Endothelial cell of umbilical vein (primary cell): ENCODE measurements at regions of chr14 and their contacts with region 1.

Region 1: DNA sequence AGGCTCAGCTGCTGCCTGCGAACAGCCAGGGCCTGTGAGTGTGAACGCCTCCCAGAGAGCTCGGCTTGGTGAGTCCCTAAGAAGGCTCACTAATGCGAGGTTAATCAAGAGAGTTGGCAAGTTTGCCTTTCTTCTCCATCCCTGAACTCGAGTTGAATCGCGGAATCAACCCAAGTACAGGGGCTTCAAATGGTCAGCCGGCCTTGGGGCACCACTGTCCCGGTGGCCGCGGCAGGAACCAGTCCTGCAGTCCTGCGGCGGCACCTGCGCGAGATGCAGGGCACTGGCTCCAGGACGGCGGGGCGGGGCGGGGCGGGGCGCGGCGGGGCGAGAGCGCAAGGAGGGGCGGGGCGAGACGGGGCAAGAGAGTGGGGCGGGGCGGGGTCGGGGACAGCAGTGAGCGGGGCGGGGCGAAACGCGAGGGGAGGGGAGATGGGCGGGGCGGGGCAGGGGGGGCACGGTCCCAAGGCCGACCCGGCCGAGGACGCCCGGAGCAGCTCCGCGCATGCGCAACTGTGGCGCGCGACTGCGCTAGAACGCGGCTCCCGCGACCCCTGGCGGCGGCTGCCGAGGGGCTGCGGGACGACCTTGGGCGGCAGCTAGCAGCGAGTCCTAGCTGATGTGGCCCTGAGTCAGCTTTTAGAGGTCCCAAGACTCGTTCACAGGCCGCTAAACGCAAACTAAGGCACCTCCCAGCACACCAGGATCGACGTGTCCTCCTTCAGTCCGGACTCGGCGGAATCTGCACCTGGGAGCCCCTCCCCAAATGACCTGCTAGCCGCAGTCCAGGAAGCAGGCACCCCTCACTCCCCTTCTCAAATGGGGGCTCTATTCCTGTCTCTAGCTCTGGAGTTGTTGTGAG is 58.0 kb downstream of the TTC7B start:
- DNase-seq: peak; percentile 94
- H3K4me3 ChIP-seq: peak overlapping the region in 2 of 3 experiments; percentile 34
- H3K27ac ChIP-seq: peak overlapping the region; percentile 61
- H3K4me1 ChIP-seq: peaks cover 15% of the 10 kb centered on the region
- H3K27me3 ChIP-seq: no peaks in the 10 kb centered on the region
- CTCF ChIP-seq: peak; percentile 79 to 94
- POLR2A ChIP-seq: no peak

Region 2: GRCh38 chr14:90288651-90289355 is 469.5 kb before region 1 on chr14:
- CTCF ChIA-PET with region 1: interaction called, 22 read pairs
- POLR2A ChIA-PET with region 1: no interaction called
- dilution Hi-C with region 1: no loop called
- intact Hi-C with region 1: loop called (anchors 5 kb)
- DNase-seq: peak; percentile 68
- H3K4me3 ChIP-seq: no peak overlapping the region
- H3K27ac ChIP-seq: no peak overlapping the region
- H3K4me1 ChIP-seq: peaks cover 5% of the 10 kb centered on the region
- H3K27me3 ChIP-seq: no peaks in the 10 kb centered on the region
- CTCF ChIP-seq: no peak
- POLR2A ChIP-seq: no peak

Region 3: DNA sequence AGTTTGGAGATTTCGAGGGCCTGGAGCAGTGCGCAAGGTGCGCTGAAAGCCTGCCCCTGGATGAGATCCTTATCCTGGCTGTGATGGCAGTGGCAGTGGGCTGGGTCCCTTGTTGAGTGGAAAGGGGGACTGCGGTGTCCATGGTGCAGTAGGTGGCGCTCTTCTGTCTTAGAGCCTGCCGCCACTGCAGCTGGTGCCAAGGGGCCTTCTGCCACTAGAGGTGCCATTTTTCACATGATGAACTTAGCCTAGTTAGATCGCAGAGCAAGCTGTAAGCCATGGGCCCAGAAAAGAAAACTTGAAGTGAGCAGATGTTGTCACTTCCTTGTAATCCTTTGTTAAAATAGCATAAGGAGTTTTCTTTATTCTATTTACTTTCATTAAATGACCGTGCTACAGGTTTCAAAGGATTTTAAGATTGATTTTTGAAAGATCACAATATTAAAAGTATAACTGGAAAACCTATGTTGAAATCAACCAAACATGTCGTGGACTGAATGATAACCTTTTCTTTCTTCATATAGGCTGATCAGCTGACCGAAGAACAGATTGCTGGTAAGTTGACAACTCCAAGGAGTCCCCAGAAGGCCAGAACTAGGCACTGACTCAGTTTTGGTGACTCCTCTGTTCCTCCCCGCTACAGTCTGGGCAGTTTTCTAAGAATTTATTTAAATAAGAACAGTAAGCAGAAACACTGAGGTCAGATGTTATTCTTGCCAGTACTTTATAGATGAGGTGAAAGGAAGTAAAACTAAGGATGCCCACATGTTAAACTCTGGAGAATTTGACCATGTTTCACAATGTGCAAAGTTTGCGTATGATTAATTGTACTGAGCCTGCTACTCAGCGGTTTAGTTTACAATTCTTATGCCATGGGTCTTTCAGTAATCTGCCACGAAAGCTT is 358.5 kb before region 1 on chr14:
- CTCF ChIA-PET with region 1: interaction called, 28 read pairs
- POLR2A ChIA-PET with region 1: interaction called, 13 read pairs
- dilution Hi-C with region 1: no loop called
- intact Hi-C with region 1: loop called (anchors 1 kb)
- DNase-seq: peak; percentile 95
- H3K4me3 ChIP-seq: peak overlapping the region in 1 of 3 experiments; percentile 78
- H3K27ac ChIP-seq: peak overlapping the region; percentile 33
- H3K4me1 ChIP-seq: peaks cover 35% of the 10 kb centered on the region
- H3K27me3 ChIP-seq: no peaks in the 10 kb centered on the region
- CTCF ChIP-seq: peak; percentile 100
- POLR2A ChIP-seq: no peak

Region 4: DNA sequence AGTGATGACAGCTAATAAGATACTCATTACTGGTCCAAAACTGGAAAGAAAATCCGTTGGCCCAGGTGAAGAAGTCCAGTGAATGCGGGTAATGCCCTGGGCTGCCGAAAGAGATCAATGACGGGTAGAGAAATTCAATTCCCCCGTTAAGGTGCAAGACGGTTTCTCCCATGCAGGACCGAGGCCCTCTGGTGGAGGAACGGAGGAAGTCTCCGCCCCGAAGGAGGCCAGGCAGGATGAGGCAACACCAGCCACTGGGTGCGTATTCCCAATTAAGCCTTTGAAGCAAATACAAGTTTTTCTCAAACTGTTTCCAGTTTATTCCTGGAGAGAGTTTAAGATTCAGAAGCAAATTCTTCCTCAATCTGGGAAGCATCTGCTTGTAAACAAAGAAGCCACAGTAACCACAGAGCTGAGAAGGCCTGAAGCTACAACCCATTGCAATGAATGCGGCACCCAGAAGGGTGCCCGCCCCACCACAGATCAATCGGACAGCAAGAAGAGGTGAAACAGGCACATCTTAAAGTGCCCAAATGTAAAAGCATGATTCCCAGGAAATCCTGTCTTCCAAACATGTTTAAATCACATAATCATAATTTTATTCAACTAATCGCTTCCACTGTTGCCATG is 60.6 kb before region 1 on chr14:
- CTCF ChIA-PET with region 1: interaction called, 33 read pairs
- POLR2A ChIA-PET with region 1: no interaction called
- dilution Hi-C with region 1: no loop called
- intact Hi-C with region 1: loop called (anchors 1 kb)
- DNase-seq: peak; percentile 76
- H3K4me3 ChIP-seq: no peak overlapping the region
- H3K27ac ChIP-seq: no peak overlapping the region
- H3K4me1 ChIP-seq: peaks cover 18% of the 10 kb centered on the region
- H3K27me3 ChIP-seq: no peaks in the 10 kb centered on the region
- CTCF ChIP-seq: peak; percentile 92
- POLR2A ChIP-seq: no peak

Region 5: GRCh38 chr14:90785471-90785870 is 27.2 kb after region 1 on chr14:
- CTCF ChIA-PET with region 1: interaction called, 10 read pairs
- POLR2A ChIA-PET with region 1: no interaction called
- dilution Hi-C with region 1: no loop called
- intact Hi-C with region 1: no loop called
- DNase-seq: peak; percentile 37
- H3K4me3 ChIP-seq: no peak overlapping the region
- H3K27ac ChIP-seq: no peak overlapping the region
- H3K4me1 ChIP-seq: no peaks in the 10 kb centered on the region
- H3K27me3 ChIP-seq: no peaks in the 10 kb centered on the region
- CTCF ChIP-seq: peak; percentile 21 to 34
- POLR2A ChIP-seq: no peak

Region 6: DNA sequence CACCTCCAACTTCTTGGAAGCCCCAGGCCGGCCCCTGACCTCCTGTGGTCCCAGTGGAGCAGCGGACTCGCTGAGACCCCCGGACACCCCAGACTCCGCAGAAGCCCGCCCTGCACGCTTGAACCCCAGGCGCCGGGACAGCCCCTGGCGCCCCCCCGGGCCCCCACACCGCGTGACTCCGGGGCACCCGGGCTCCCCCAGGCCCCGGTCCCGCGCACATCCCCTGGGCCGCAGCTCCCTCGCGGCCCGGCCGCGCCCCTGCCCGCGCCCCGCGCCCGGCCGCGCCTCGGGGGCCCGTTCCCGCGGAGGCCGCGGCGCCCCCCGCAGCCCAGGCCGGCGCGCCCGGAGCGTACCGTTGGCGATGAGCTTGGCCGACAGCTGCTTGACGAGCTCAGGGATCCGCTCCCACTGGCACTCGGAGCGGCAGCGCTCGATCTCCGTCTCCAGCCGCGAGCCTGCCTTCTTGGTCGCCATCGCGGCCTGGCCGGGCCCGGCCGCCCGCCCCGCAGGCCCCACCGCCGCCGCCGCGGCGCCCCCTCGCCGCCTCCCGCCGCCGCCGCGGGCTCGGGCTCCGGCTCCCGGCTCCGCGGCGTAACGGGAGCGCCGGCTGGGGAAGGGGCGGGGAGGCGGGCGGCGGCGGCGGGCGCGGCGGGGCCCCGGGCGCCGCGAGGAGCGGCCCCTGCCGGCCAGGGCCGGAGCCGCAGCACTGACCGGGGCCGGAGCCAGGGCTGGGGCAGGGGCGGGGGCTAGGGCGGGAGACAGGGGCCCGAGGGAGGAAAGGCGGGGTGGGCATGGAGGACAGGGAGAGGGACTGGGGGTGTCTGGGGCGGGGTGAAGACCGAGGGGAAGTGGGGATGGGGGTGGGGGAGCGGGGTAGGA is 57.8 kb after region 1 on chr14 and contains the start of gene TTC7B:
- CTCF ChIA-PET with region 1: interaction called, 47 read pairs
- POLR2A ChIA-PET with region 1: no interaction called
- dilution Hi-C with region 1: no loop called
- intact Hi-C with region 1: loop called (anchors 1 kb)
- DNase-seq: no peak
- H3K4me3 ChIP-seq: peak within 1 kb of the TSS; percentile 70 to 95 (median 94)
- H3K27ac ChIP-seq: peak within 1 kb of the TSS; percentile 41
- H3K4me1 ChIP-seq: peaks cover 9% of the 10 kb centered on the region
- H3K27me3 ChIP-seq: no peaks in the 10 kb centered on the region
- CTCF ChIP-seq: peak in 1 of 2 donors; percentile 47
- POLR2A ChIP-seq: no peak
- total RNA-seq, gene TTC7B: 76.5 and 86.4 TPM in 2 replicates

Region 7: DNA sequence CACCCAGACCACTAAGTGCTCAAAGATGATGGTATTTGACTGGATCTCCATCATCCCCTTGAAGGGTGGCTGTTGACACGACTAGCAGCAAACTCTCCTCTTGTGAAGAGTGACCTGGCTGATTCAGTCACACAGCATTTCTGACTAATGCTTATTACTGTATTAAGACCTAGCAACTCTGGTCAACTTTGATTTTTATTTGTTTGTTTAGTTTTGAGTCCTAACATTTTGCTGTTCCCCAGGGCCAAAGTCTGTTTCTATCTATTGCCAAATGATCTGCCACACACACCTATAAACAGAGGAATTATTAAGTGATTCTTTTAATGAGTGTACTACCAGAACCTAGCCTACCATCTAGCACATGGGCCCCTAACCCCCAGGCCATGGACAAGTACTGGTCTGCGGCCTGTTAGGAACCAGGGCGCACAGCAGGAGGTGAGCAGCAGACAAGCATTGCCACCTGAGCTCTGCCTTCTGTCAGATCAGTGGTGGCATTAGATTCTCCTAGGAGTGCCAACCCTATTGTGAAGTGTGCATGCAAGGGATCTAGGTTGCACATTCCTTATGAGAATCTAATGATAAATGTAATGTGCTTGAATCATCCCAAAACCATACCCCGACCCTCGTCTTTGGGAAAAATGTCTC is 182.2 kb after region 1 on chr14:
- CTCF ChIA-PET with region 1: no interaction called
- POLR2A ChIA-PET with region 1: no interaction called
- dilution Hi-C with region 1: no loop called
- intact Hi-C with region 1: no loop called
- DNase-seq: no peak
- H3K4me3 ChIP-seq: no peak overlapping the region
- H3K27ac ChIP-seq: no peak overlapping the region
- H3K4me1 ChIP-seq: no peaks in the 10 kb centered on the region
- H3K27me3 ChIP-seq: no peaks in the 10 kb centered on the region
- CTCF ChIP-seq: no peak
- POLR2A ChIP-seq: no peak

Region 8: GRCh38 chr14:91202234-91202974 is 444.1 kb after region 1 on chr14:
- CTCF ChIA-PET with region 1: no interaction called
- POLR2A ChIA-PET with region 1: no interaction called
- dilution Hi-C with region 1: no loop called
- intact Hi-C with region 1: no loop called
- DNase-seq: peak; percentile 47
- H3K4me3 ChIP-seq: peak overlapping the region in 1 of 3 experiments; percentile 11
- H3K27ac ChIP-seq: peak overlapping the region; percentile 69
- H3K4me1 ChIP-seq: peaks cover 12% of the 10 kb centered on the region
- H3K27me3 ChIP-seq: no peaks in the 10 kb centered on the region
- CTCF ChIP-seq: no peak
- POLR2A ChIP-seq: no peak